H1 (cell line): ENCODE measurements at regions of chr17 and their contacts with region 1.

Region 1: GRCh38 chr17:8997994-8998628 is 23.2 kb upstream of the NTN1 start:
- DNase-seq: peak in 1 of 2 experiments; percentile 85
- H3K4me3 ChIP-seq: no peak overlapping the region
- H3K27ac ChIP-seq: no peak overlapping the region
- H3K4me1 ChIP-seq: peaks cover 6 to 15% (median 12%) of the 10 kb centered on the region in 4 experiments; a peak in 5 of 7 replicates
- H3K27me3 ChIP-seq: peaks cover 17 to 23% (median 18%) of the 10 kb centered on the region in 4 experiments
- CTCF ChIP-seq: peak; percentile 95 to 99 (median 96)
- EP300 ChIP-seq: no peak
- POLR2A ChIP-seq: no peak
- RAD21 ChIP-seq: peak; percentile 84 to 87

Region 2: GRCh38 chr17:8514801-8515200 is 483.3 kb before region 1 on chr17:
- CTCF ChIA-PET with region 1: no interaction called
- POLR2A ChIA-PET with region 1: no interaction called
- DNase-seq: no peak
- H3K4me3 ChIP-seq: no peak overlapping the region
- H3K27ac ChIP-seq: no peak overlapping the region
- H3K4me1 ChIP-seq: no peaks in the 10 kb centered on the region
- H3K27me3 ChIP-seq: no peaks in the 10 kb centered on the region
- CTCF ChIP-seq: no peak
- EP300 ChIP-seq: no peak
- POLR2A ChIP-seq: no peak
- RAD21 ChIP-seq: no peak

Region 3: DNA sequence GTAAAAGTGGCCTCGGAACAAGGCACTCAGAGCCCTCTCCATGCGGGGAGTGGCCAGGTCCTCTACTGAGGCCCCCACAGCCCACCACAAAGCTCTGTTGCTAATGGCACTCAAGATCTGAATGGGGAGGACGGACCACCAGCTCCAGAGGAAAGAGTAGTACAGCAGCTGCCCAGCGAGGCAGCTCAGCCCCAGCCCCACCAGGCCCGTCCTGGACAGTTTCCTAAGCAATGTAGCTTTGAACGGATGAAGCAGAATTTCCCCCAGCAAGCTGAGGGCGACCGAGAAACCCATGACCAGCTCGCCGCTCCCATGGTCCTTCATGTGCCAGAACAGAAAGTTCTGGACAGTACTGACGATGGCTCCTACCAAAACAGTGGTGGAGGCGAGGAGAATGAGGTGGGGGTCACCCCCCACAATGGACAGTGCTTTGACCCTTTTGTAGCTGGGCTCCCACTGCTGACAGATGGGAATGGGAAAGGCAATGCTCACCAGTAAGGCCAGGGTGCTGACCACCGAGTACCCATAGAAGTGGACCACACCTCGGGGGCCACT is 200.4 kb before region 1 on chr17:
- CTCF ChIA-PET with region 1: no interaction called
- POLR2A ChIA-PET with region 1: no interaction called
- DNase-seq: peak in 1 of 2 experiments; percentile 31
- H3K4me3 ChIP-seq: no peak overlapping the region
- H3K27ac ChIP-seq: no peak overlapping the region
- H3K4me1 ChIP-seq: peaks cover 0 to 10% (median 4%) of the 10 kb centered on the region in 4 experiments; a peak in 5 of 7 replicates
- H3K27me3 ChIP-seq: peaks cover 0 to 6% (median 1%) of the 10 kb centered on the region in 4 experiments; a peak in 2 of 7 replicates
- CTCF ChIP-seq: no peak
- EP300 ChIP-seq: no peak
- POLR2A ChIP-seq: no peak
- RAD21 ChIP-seq: no peak

Region 4: GRCh38 chr17:8887834-8888703 is 110.0 kb before region 1 on chr17:
- CTCF ChIA-PET with region 1: interaction called, 34 read pairs
- POLR2A ChIA-PET with region 1: no interaction called
- DNase-seq: peak in 1 of 2 experiments; percentile 87
- H3K4me3 ChIP-seq: no peak overlapping the region
- H3K27ac ChIP-seq: no peak overlapping the region
- H3K4me1 ChIP-seq: peaks cover 0 to 9% (median 3%) of the 10 kb centered on the region in 4 experiments; a peak in 3 of 7 replicates
- H3K27me3 ChIP-seq: no peaks in the 10 kb centered on the region
- CTCF ChIP-seq: peak; percentile 67 to 83 (median 71)
- EP300 ChIP-seq: no peak
- POLR2A ChIP-seq: no peak
- RAD21 ChIP-seq: peak; percentile 73 to 82

Region 5: GRCh38 chr17:8985054-8985701 is 12.9 kb before region 1 on chr17:
- CTCF ChIA-PET with region 1: interaction called, 10 read pairs
- POLR2A ChIA-PET with region 1: no interaction called
- DNase-seq: no peak
- H3K4me3 ChIP-seq: no peak overlapping the region
- H3K27ac ChIP-seq: no peak overlapping the region
- H3K4me1 ChIP-seq: no peaks in the 10 kb centered on the region
- H3K27me3 ChIP-seq: no peaks in the 10 kb centered on the region
- CTCF ChIP-seq: no peak
- EP300 ChIP-seq: no peak
- POLR2A ChIP-seq: no peak
- RAD21 ChIP-seq: no peak

Region 6: DNA sequence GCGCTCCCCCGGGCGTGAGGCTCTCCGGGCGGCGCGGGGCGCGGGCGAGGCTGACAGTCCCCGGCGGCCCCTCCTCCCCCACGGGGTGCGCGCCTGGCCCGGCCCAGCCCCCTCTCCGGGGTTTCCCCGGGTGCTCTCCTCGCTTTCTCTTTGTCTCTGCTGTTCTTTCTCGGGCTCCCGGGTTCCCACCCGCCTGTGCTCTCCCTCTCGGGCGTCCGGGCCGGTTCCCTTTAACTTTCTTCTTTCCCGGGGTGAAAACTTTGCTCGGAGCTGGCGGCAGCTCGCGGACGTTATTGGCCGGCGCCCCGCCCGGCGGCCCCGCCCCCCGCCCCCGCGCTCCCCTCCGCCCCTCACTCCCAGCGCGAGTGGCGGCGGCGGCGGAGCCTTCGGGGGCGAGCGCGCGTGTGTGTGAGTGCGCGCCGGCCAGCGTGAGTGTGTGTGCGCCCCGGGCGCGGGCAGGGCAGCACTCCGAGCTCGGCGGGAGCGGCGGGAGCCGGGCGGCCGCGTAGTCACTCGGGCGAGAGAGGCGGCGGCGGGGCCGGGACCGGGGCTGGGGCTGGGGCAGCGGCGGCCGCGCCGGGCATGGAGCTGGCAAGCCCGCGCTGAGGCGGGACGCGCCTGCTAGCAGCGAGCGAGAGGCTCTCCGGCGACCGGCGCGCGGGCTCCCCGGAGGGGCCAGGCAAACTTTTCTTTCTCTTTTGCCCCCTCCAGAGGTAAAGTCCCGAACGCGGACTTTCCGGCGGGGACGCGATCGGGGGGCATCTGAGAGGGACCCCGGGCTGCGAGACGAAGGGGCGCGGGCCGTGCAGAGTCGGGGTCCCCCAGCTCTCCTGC is 23.3 kb after region 1 on chr17 and contains the start of gene NTN1:
- CTCF ChIA-PET with region 1: interaction called, 38 read pairs
- POLR2A ChIA-PET with region 1: interaction called, 4 read pairs
- DNase-seq: peak in 1 of 2 experiments; percentile 77
- H3K4me3 ChIP-seq: peak within 1 kb of the TSS; percentile 40 to 66 (median 48)
- H3K27ac ChIP-seq: no peak within 1 kb of the TSS
- H3K4me1 ChIP-seq: peaks cover 10 to 29% (median 18%) of the 10 kb centered on the region in 4 experiments
- H3K27me3 ChIP-seq: peaks cover 47 to 94% (median 73%) of the 10 kb centered on the region in 4 experiments
- CTCF ChIP-seq: no peak
- EP300 ChIP-seq: no peak
- POLR2A ChIP-seq: no peak
- RAD21 ChIP-seq: no peak
- total RNA-seq, gene NTN1: 2.0 and 2.3 TPM in 2 replicates

Region 7: GRCh38 chr17:9050801-9051401 is 52.8 kb after region 1 on chr17:
- CTCF ChIA-PET with region 1: interaction called, 11 read pairs
- POLR2A ChIA-PET with region 1: no interaction called
- DNase-seq: peak; percentile 41 to 59
- H3K4me3 ChIP-seq: no peak overlapping the region
- H3K27ac ChIP-seq: no peak overlapping the region
- H3K4me1 ChIP-seq: peaks cover 10 to 29% (median 21%) of the 10 kb centered on the region in 4 experiments
- H3K27me3 ChIP-seq: peaks cover 3 to 30% (median 29%) of the 10 kb centered on the region in 4 experiments
- CTCF ChIP-seq: no peak
- EP300 ChIP-seq: no peak
- POLR2A ChIP-seq: no peak
- RAD21 ChIP-seq: no peak

Region 8: DNA sequence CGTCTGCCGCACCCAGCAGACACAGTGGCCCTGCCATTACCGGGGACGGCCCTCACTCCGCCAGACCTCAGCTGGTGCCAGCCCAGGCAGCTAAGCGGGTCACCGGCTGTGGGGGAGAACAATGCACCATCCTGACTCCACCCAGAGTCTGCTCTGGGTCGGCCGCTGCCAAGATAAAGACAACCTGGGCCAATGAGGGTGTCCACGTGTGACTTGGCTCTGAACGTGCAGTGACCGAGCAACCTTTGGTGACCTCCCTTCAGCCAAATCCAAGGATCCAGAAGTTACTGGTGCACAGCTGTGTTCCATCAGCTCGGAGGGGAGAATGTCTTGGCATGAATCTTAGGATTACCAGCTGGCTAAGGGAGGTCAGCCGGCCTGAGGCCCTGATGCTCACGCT is 179.1 kb after region 1 on chr17:
- CTCF ChIA-PET with region 1: interaction called, 11 read pairs
- POLR2A ChIA-PET with region 1: interaction called, 3 read pairs
- DNase-seq: no peak
- H3K4me3 ChIP-seq: no peak overlapping the region
- H3K27ac ChIP-seq: no peak overlapping the region
- H3K4me1 ChIP-seq: peaks cover 0 to 4% (median 0%) of the 10 kb centered on the region in 4 experiments; a peak in 1 of 7 replicates
- H3K27me3 ChIP-seq: no peaks in the 10 kb centered on the region
- CTCF ChIP-seq: no peak
- EP300 ChIP-seq: no peak
- POLR2A ChIP-seq: no peak
- RAD21 ChIP-seq: no peak

Region 9: GRCh38 chr17:9522074-9522473 is 524.0 kb after region 1 on chr17:
- CTCF ChIA-PET with region 1: interaction called, 12 read pairs
- POLR2A ChIA-PET with region 1: no interaction called
- DNase-seq: no peak
- H3K4me3 ChIP-seq: no peak overlapping the region
- H3K27ac ChIP-seq: no peak overlapping the region
- H3K4me1 ChIP-seq: peaks cover 0 to 8% (median 3%) of the 10 kb centered on the region in 4 experiments; a peak in 3 of 7 replicates
- H3K27me3 ChIP-seq: no peaks in the 10 kb centered on the region
- CTCF ChIP-seq: peak in 2 of 3 experiments; percentile 64 to 71; a peak in 3 of 4 replicates
- EP300 ChIP-seq: no peak
- POLR2A ChIP-seq: no peak
- RAD21 ChIP-seq: peak; percentile 85 to 88